ENCODE measurements at regions of chr9 and their contacts with region 1.

Region 1: DNA sequence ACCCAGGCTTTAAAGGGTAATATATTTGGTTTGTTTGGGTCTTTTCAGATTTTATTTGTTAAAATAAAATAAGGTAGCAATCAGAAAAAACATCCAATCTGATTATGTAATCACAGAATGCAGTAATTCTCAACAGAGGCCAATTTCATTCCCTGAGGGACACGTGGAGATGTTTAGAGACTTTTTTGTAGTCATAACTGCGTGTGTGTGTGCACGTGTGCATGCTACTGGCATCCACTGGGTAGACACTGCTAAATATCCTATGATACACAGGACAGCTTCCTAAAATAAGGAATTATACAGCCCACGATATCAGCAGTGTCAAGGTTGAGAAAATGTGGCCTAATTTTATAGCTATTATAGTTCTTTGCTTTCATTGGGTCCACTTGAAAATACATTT is 180.8 kb upstream of the KLF9 start:
- DNase-seq: no peak
- ATAC-seq: peak in 2 of 4 donors; percentile 33 to 38
- H3K4me3 ChIP-seq: no peak overlapping the region
- H3K27ac ChIP-seq: peak overlapping the region in 2 of 12 donors; percentile 17 to 47
- H3K4me1 ChIP-seq: peaks cover 0 to 28% (median 7%) of the 10 kb centered on the region in 12 donors
- H3K27me3 ChIP-seq: no peaks in the 10 kb centered on the region
- CTCF ChIP-seq: no peak
- POLR2A ChIP-seq: no peak

Region 2: GRCh38 chr9:70494221-70494620 is 101.0 kb before region 1 on chr9:
- intact Hi-C with region 1: loop called in 3 of 10 experiments (anchors 5 kb)
- DNase-seq: peak in 2 of 5 donors; percentile 49 to 63
- ATAC-seq: peak in 3 of 4 donors; percentile 41 to 74 (median 57)
- H3K4me3 ChIP-seq: no peak overlapping the region
- H3K27ac ChIP-seq: peak overlapping the region in 10 of 12 donors; percentile 2 to 80 (median 51)
- H3K4me1 ChIP-seq: peaks cover 4 to 57% (median 34%) of the 10 kb centered on the region in 12 donors
- H3K27me3 ChIP-seq: no peaks in the 10 kb centered on the region
- CTCF ChIP-seq: no peak
- POLR2A ChIP-seq: no peak

Region 3: GRCh38 chr9:70563431-70564204 is 31.6 kb before region 1 on chr9:
- intact Hi-C with region 1: loop called in 1 of 10 experiments (anchors 5 kb)
- DNase-seq: no peak
- ATAC-seq: peak; percentile 45 to 82 (median 70)
- H3K4me3 ChIP-seq: peak overlapping the region in 1 of 12 donors; percentile 6
- H3K27ac ChIP-seq: peak overlapping the region in 8 of 12 donors; percentile 5 to 95 (median 15)
- H3K4me1 ChIP-seq: peaks cover 0 to 39% (median 0%) of the 10 kb centered on the region in 12 donors
- H3K27me3 ChIP-seq: no peaks in the 10 kb centered on the region
- CTCF ChIP-seq: no peak
- POLR2A ChIP-seq: no peak

Measured in heart left ventricle (tissue), 16 donors.